Activated CD8-positive, alpha-beta T cell treated with anti-CD3 and anti-CD28 coated beads, Interleukin-2, amount 10 ng/mL, durations not matched to agents 7 days and 5 days (primary cell): ENCODE measurements at regions of chrX and their contacts with region 1.

Region 1: GRCh38 chrX:37755025-37755424 is 24.8 kb upstream of the CYBB start:
- DNase-seq: peak; percentile 51
- ATAC-seq: peak; percentile 84
- H3K4me3 Mint-ChIP-seq: no peak overlapping the region
- H3K27ac Mint-ChIP-seq: no peak overlapping the region
- H3K4me1 Mint-ChIP-seq: peaks cover 16% of the 10 kb centered on the region
- H3K27me3 Mint-ChIP-seq: no peaks in the 10 kb centered on the region

Region 2: GRCh38 chrX:37796805-37797204 is 41.8 kb after region 1 on chrX:
- CTCF ChIA-PET with region 1: no interaction called
- POLR2A ChIA-PET with region 1: no interaction called
- DNase-seq: no peak
- ATAC-seq: peak; percentile 42
- H3K4me3 Mint-ChIP-seq: no peak overlapping the region
- H3K27ac Mint-ChIP-seq: no peak overlapping the region
- H3K4me1 Mint-ChIP-seq: peaks cover 21% of the 10 kb centered on the region
- H3K27me3 Mint-ChIP-seq: no peaks in the 10 kb centered on the region

Region 3: DNA sequence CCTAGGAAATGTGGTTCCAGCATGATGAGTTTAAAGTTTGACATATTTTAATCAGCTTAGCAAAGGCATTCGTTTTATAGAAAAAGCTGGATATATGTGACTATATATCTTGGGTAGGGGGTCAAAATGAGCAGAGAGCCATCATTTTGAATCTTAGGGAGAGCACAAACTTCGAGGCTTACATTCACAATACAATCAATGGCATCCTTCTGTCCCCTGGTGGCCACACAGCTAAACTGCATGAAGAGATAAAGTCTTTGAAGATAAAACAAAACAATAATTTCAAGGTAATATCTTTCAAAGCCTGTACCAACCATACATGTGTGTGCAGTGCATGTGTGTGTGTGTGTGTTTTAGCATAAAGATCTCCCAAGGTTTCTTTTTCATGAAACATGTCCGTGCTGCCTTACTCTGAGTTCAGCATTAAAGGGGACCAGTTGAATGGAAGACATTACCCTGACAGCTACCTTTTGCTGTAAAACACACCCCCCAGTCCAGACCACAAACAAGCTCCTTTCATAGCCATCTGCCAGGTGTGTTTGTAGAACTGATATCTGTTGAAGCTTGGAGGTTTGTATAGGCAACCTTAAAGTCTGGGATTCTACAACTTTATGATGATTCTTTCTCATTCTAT is 70.3 kb after region 1 on chrX:
- CTCF ChIA-PET with region 1: interaction called, 18 read pairs
- POLR2A ChIA-PET with region 1: interaction called, 3 read pairs
- DNase-seq: peak; percentile 71
- ATAC-seq: peak; percentile 70
- H3K4me3 Mint-ChIP-seq: no peak overlapping the region
- H3K27ac Mint-ChIP-seq: peak overlapping the region; percentile 62
- H3K4me1 Mint-ChIP-seq: peaks cover 35% of the 10 kb centered on the region
- H3K27me3 Mint-ChIP-seq: no peaks in the 10 kb centered on the region